ENCODE measurements at regions of chr6 and their contacts with region 1.

Region 1: DNA sequence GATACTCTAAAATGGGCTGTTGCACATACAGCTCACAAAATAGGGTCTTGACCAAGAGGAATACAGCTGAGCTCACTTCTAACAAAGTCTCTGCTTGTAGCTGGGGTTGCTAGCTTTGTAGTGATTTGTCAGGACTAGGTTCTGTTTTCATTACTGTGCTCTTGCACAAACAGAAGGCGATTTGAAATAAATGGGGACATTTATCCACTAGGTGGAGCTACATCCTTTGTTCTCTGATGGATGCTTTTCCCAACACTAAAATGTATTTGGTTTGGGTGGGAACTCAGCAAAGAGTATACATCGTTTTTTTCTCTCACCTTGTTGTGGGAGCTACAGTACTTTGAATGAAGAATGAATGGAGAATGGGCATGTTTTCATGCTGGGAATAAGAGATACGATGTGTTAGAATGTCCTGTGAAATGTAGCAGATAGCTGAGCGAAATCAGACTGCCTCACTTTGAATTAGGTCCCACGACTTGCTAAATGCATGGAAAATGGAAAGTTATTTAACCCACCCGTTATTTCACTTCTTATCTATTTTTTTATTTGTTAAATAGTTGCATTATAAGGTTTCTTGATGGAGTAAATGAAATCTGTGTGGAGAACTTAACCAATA is 494.7 kb upstream of the MAP3K7 start:
- DNase-seq: no peak
- ATAC-seq: peak; percentile 82
- H3K4me3 ChIP-seq: no peak overlapping the region
- H3K27ac ChIP-seq: no peak overlapping the region
- H3K4me1 ChIP-seq: no peaks in the 10 kb centered on the region
- H3K27me3 ChIP-seq: no peaks in the 10 kb centered on the region
- CTCF ChIP-seq: peak; percentile 52 to 73 (median 65)
- EP300 ChIP-seq: no peak
- POLR2A ChIP-seq: no peak
- RAD21 ChIP-seq: peak; percentile 76

Region 2: GRCh38 chr6:91094806-91095475 is 13.4 kb after region 1 on chr6:
- CTCF ChIA-PET with region 1: interaction called, 44 read pairs
- POLR2A ChIA-PET with region 1: interaction called, 3 read pairs
- RAD21 ChIA-PET with region 1: interaction called, 21 read pairs
- SMC1A ChIA-PET with region 1: interaction called, 9 read pairs
- in situ Hi-C with region 1: no loop called
- intact Hi-C with region 1: no loop called
- DNase-seq: no peak
- ATAC-seq: no peak
- H3K4me3 ChIP-seq: no peak overlapping the region
- H3K27ac ChIP-seq: no peak overlapping the region
- H3K4me1 ChIP-seq: no peaks in the 10 kb centered on the region
- H3K27me3 ChIP-seq: no peaks in the 10 kb centered on the region
- CTCF ChIP-seq: no peak
- EP300 ChIP-seq: no peak
- POLR2A ChIP-seq: no peak
- RAD21 ChIP-seq: no peak

Region 3: GRCh38 chr6:91173651-91174050 is 92.1 kb after region 1 on chr6:
- CTCF ChIA-PET with region 1: interaction called, 15 read pairs
- POLR2A ChIA-PET with region 1: no interaction called
- RAD21 ChIA-PET with region 1: interaction called, 31 read pairs
- SMC1A ChIA-PET with region 1: interaction called, 25 read pairs
- in situ Hi-C with region 1: no loop called
- intact Hi-C with region 1: no loop called
- DNase-seq: no peak
- ATAC-seq: no peak
- H3K4me3 ChIP-seq: no peak overlapping the region
- H3K27ac ChIP-seq: no peak overlapping the region
- H3K4me1 ChIP-seq: no peaks in the 10 kb centered on the region
- H3K27me3 ChIP-seq: no peaks in the 10 kb centered on the region
- CTCF ChIP-seq: no peak
- EP300 ChIP-seq: no peak
- POLR2A ChIP-seq: no peak
- RAD21 ChIP-seq: no peak

Region 4: DNA sequence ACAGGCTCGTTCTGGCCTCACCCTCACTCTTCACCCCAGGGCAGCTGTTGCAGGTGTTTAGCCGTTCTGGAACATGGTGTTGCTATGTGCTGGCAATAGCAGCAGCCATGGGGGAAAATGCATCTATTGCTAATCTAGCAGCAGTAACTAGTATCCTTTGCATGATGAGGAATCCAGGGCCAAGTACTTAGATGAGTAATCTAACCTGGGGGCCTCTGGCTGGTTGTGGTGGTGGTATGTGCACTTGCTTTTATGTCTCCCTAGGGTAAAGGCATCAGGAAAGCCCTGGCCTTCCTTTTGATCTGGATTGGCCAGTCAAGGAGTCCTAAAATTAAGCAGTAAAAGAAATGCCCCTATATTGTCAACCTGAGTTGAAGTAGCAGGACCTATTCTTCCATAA is 99.9 kb after region 1 on chr6:
- CTCF ChIA-PET with region 1: interaction called, 5 read pairs
- POLR2A ChIA-PET with region 1: no interaction called
- RAD21 ChIA-PET with region 1: interaction called, 3 read pairs
- SMC1A ChIA-PET with region 1: interaction called, 25 read pairs
- in situ Hi-C with region 1: no loop called
- intact Hi-C with region 1: no loop called
- DNase-seq: no peak
- ATAC-seq: no peak
- H3K4me3 ChIP-seq: no peak overlapping the region
- H3K27ac ChIP-seq: no peak overlapping the region
- H3K4me1 ChIP-seq: no peaks in the 10 kb centered on the region
- H3K27me3 ChIP-seq: no peaks in the 10 kb centered on the region
- CTCF ChIP-seq: no peak
- EP300 ChIP-seq: no peak
- POLR2A ChIP-seq: no peak
- RAD21 ChIP-seq: no peak

Region 5: GRCh38 chr6:92635553-92636153 is 1554.1 kb after region 1 on chr6:
- CTCF ChIA-PET with region 1: interaction called, 11 read pairs
- POLR2A ChIA-PET with region 1: no interaction called
- RAD21 ChIA-PET with region 1: interaction called, 3 read pairs
- SMC1A ChIA-PET with region 1: interaction called, 5 read pairs
- in situ Hi-C with region 1: loop called (anchors 25 kb)
- intact Hi-C with region 1: loop called (anchors 5 kb)
- DNase-seq: no peak
- ATAC-seq: no peak
- H3K4me3 ChIP-seq: no peak overlapping the region
- H3K27ac ChIP-seq: no peak overlapping the region
- H3K4me1 ChIP-seq: no peaks in the 10 kb centered on the region
- H3K27me3 ChIP-seq: no peaks in the 10 kb centered on the region
- CTCF ChIP-seq: no peak
- EP300 ChIP-seq: no peak
- POLR2A ChIP-seq: no peak
- RAD21 ChIP-seq: no peak

Region 6: DNA sequence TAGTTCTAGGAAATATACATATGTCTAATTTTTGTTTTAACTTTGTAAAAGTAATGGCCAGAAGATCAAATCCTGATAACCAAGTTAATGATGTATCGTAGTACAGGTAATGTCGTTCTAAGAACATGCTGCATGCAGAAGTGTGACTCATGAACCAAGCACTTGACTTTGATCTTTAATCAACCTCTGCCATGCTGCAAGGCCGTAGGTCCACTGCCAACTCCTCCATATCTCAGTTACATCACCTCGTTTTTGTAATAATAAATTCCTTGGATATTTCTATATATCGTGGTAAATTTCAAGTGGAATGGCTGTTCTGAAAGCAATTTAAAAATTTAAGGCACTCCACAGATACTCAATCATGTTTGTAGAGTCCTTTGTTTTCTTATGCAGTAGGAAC is 1566.1 kb after region 1 on chr6:
- CTCF ChIA-PET with region 1: interaction called, 16 read pairs
- POLR2A ChIA-PET with region 1: no interaction called
- RAD21 ChIA-PET with region 1: interaction called, 7 read pairs
- SMC1A ChIA-PET with region 1: interaction called, 4 read pairs
- in situ Hi-C with region 1: loop called (anchors 25 kb)
- intact Hi-C with region 1: loop called (anchors 5 kb)
- DNase-seq: no peak
- ATAC-seq: no peak
- H3K4me3 ChIP-seq: no peak overlapping the region
- H3K27ac ChIP-seq: no peak overlapping the region
- H3K4me1 ChIP-seq: no peaks in the 10 kb centered on the region
- H3K27me3 ChIP-seq: no peaks in the 10 kb centered on the region
- CTCF ChIP-seq: no peak
- EP300 ChIP-seq: no peak
- POLR2A ChIP-seq: no peak
- RAD21 ChIP-seq: no peak

Region 7: GRCh38 chr6:92777146-92777740 is 1695.7 kb after region 1 on chr6:
- CTCF ChIA-PET with region 1: interaction called, 5 read pairs
- POLR2A ChIA-PET with region 1: no interaction called
- RAD21 ChIA-PET with region 1: interaction called, 3 read pairs
- SMC1A ChIA-PET with region 1: interaction called, 4 read pairs
- in situ Hi-C with region 1: no loop called
- intact Hi-C with region 1: loop called (anchors 2 kb)
- DNase-seq: no peak
- ATAC-seq: peak; percentile 87
- H3K4me3 ChIP-seq: no peak overlapping the region
- H3K27ac ChIP-seq: no peak overlapping the region
- H3K4me1 ChIP-seq: no peaks in the 10 kb centered on the region
- H3K27me3 ChIP-seq: no peaks in the 10 kb centered on the region
- CTCF ChIP-seq: peak; percentile 47
- EP300 ChIP-seq: no peak
- POLR2A ChIP-seq: no peak
- RAD21 ChIP-seq: peak; percentile 63

Measured in GM12878 (cell line).